ENCODE measurements at regions of chr2 and their contacts with region 1.

Region 1: DNA sequence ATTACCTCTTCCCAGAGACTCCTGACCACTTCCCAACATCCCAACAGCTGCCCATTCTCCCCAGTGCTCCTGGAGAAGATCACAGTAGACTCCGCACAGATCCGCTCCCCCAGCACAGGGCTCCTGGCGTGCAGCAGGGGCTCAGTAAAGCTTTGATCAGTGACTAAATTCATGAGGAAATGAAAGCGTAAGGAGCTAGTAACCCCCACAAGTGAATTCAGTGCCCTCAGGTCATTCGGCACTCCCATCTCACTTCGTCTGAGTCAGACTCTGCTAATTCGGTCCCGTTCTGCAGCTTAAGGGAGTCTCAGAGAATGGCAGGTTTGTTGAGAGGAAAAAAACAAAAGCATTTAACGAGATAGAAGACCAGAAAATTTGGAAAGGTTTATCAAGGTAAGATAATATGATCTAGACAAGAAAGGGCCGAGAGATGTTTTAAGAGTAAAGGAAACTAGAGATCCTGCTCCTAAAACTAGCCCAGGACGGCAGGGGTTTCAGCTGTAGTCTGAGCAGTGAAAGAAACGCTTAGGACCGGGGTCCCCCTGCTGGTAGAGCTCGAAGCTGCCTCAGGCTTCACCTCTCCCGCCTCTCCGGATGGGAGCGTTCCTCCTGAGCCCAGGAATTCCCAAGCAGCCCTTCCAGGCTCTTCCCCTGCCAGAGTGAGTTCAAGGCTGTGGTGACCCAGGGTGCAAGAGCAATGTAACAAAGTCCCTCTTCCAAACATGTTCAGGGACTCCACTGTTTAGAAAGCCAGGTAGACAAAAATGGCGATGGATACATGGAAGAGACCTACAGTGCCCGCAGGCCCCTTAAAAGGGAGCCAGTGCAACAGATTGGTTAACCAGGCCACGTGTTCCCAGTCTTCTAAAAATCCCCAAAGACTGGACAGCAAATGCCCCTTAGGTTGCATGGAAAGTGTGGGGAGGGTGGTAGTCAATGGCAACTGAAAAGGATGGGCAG is 127.3 kb downstream of the DNER start:
- DNase-seq: peak; percentile 42 to 49 (median 44)
- ATAC-seq: peak; percentile 97
- H3K4me3 ChIP-seq: no peak overlapping the region
- H3K27ac ChIP-seq: no peak overlapping the region
- H3K4me1 ChIP-seq: no peaks in the 10 kb centered on the region
- H3K27me3 ChIP-seq: no peaks in the 10 kb centered on the region
- CTCF ChIP-seq: peak; percentile 57 to 59 (median 59)
- EP300 ChIP-seq: no peak
- POLR2A ChIP-seq: no peak
- RAD21 ChIP-seq: peak; percentile 52 to 62

Region 2: DNA sequence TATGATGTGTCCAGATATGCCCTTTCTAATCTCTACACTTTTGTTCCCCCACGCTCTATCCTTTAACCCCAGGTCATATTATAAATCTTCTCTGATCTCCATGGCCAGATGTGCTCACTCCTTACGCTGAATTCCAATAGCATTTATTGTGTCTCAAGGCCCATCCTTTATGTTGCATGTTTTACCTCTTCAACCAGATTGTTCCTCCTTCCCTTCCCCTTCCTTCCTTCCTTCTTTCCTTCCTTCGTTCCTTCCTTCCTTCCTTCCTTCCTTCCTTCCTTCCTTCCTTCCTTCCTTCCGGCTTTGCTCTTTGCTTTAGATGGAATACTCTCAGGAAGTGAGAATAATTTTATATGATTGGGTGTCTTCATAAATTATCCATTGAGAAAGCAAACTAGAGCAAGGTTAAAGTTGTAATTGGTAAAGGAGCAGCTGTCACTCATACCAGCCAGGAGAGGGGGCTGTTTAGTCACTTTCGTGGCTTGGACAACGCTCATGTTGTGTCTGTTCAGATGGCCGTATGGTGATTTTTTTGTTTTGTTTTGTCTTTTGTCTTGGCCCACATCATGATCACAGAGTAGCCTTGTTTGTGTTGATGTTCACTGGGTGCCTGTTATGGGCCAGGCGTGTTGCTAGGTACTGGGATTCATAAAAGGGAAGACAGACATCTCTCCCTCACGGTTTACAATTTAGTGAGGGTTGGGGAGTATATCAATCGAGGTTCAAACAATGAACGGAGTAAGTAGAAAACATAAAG is 1647.6 kb before region 1 on chr2:
- CTCF ChIA-PET with region 1: no interaction called
- POLR2A ChIA-PET with region 1: no interaction called
- in situ Hi-C with region 1: no loop called
- intact Hi-C with region 1: loop called (anchors 1 kb)
- DNase-seq: peak in 2 of 4 experiments; percentile 5 to 10
- ATAC-seq: no peak
- H3K4me3 ChIP-seq: no peak overlapping the region
- H3K27ac ChIP-seq: no peak overlapping the region
- H3K4me1 ChIP-seq: no peaks in the 10 kb centered on the region
- H3K27me3 ChIP-seq: no peaks in the 10 kb centered on the region
- CTCF ChIP-seq: 0 out of 6 replicates have a peak, but pooled peaks of 1 of the 3 experiments have one; percentile 24
- EP300 ChIP-seq: no peak
- POLR2A ChIP-seq: no peak
- RAD21 ChIP-seq: peak in 1 of 2 experiments; percentile 29; a peak in 1 of 4 replicates

Region 3: GRCh38 chr2:228131833-228132232 is 1455.2 kb before region 1 on chr2:
- CTCF ChIA-PET with region 1: no interaction called
- POLR2A ChIA-PET with region 1: no interaction called
- in situ Hi-C with region 1: no loop called
- intact Hi-C with region 1: no loop called
- DNase-seq: no peak
- ATAC-seq: no peak
- H3K4me3 ChIP-seq: no peak overlapping the region
- H3K27ac ChIP-seq: no peak overlapping the region
- H3K4me1 ChIP-seq: no peaks in the 10 kb centered on the region
- H3K27me3 ChIP-seq: no peaks in the 10 kb centered on the region
- CTCF ChIP-seq: no peak
- EP300 ChIP-seq: no peak
- POLR2A ChIP-seq: no peak
- RAD21 ChIP-seq: no peak

Region 4: DNA sequence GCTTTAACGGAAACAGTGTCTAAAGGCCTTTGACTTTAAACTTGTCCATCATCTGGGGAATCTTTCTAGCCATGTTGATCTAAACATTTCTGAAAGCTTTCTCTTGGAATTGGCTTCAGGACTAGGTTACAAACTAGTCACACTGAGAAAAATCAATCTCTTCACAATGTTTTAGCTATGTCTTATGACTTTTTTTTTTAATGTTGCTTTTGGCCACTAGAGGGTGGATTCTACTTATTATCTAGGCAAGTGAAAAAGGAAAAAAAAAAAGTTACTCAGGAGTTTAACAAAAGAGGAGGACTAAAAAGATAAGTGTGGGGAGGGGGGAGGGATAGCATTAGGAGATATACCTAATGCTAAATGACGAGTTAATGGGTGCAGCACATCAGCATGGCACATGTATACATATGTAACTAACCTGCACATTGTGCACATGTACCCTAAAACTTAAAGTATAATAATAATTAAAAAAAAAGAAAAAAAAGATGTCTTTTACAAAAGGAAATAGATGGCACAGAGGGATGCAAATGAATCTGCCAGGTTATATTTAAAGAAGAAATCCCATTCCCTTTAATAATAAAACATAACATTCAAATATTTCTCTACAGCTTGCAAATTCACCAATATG is 155.6 kb before region 1 on chr2:
- CTCF ChIA-PET with region 1: no interaction called
- POLR2A ChIA-PET with region 1: no interaction called
- in situ Hi-C with region 1: no loop called
- intact Hi-C with region 1: loop called (anchors 2 kb)
- DNase-seq: peak; percentile 2 to 10 (median 4)
- ATAC-seq: no peak
- H3K4me3 ChIP-seq: no peak overlapping the region
- H3K27ac ChIP-seq: no peak overlapping the region
- H3K4me1 ChIP-seq: no peaks in the 10 kb centered on the region
- H3K27me3 ChIP-seq: no peaks in the 10 kb centered on the region
- CTCF ChIP-seq: peak in 1 of 3 experiments; percentile 18; a peak in 1 of 6 replicates
- EP300 ChIP-seq: no peak
- POLR2A ChIP-seq: no peak
- RAD21 ChIP-seq: no peak

Region 5: GRCh38 chr2:229463525-229464346 is 123.3 kb before region 1 on chr2:
- CTCF ChIA-PET with region 1: no interaction called
- POLR2A ChIA-PET with region 1: no interaction called
- in situ Hi-C with region 1: no loop called
- intact Hi-C with region 1: no loop called
- DNase-seq: no peak
- ATAC-seq: no peak
- H3K4me3 ChIP-seq: no peak overlapping the region
- H3K27ac ChIP-seq: no peak overlapping the region
- H3K4me1 ChIP-seq: no peaks in the 10 kb centered on the region
- H3K27me3 ChIP-seq: no peaks in the 10 kb centered on the region
- CTCF ChIP-seq: no peak
- EP300 ChIP-seq: no peak
- POLR2A ChIP-seq: no peak
- RAD21 ChIP-seq: no peak

Region 6: DNA sequence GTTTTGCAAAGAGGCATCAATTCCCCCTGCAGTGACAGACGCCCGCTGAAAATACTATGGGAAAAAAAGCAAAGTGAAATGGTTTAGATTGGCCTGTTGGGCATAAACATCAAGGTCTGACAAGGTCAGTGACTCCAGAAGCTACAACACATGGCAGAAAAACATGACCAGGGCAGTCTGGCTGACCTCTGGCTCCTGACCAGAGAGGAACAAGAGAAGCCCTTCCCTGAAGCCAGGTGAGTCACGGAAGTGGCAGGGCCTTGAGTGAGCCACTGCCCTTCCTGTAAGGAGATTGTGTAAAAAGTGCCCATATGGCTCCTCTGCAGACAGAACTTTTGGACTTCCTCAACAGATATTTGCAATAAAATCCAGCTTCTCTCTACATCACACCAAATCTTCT is 55.3 kb after region 1 on chr2:
- CTCF ChIA-PET with region 1: no interaction called
- POLR2A ChIA-PET with region 1: no interaction called
- in situ Hi-C with region 1: no loop called
- intact Hi-C with region 1: no loop called
- DNase-seq: no peak
- ATAC-seq: no peak
- H3K4me3 ChIP-seq: no peak overlapping the region
- H3K27ac ChIP-seq: no peak overlapping the region
- H3K4me1 ChIP-seq: no peaks in the 10 kb centered on the region
- H3K27me3 ChIP-seq: no peaks in the 10 kb centered on the region; a peak in 1 of 5 replicates
- CTCF ChIP-seq: no peak
- EP300 ChIP-seq: no peak
- POLR2A ChIP-seq: no peak
- RAD21 ChIP-seq: no peak